GM18951 (cell line): ENCODE measurements at regions of chr22 and their contacts with region 1.

Region 1: GRCh38 chr22:22110548-22111266 is 128.1 kb upstream of the TOP3B start:
- POLR2A ChIP-seq: no peak

Region 2: GRCh38 chr22:20656902-20657836 is 1453.5 kb before region 1 on chr22:
- in situ Hi-C with region 1: loop called (anchors 25 kb)
- POLR2A ChIP-seq: no peak

Region 3: DNA sequence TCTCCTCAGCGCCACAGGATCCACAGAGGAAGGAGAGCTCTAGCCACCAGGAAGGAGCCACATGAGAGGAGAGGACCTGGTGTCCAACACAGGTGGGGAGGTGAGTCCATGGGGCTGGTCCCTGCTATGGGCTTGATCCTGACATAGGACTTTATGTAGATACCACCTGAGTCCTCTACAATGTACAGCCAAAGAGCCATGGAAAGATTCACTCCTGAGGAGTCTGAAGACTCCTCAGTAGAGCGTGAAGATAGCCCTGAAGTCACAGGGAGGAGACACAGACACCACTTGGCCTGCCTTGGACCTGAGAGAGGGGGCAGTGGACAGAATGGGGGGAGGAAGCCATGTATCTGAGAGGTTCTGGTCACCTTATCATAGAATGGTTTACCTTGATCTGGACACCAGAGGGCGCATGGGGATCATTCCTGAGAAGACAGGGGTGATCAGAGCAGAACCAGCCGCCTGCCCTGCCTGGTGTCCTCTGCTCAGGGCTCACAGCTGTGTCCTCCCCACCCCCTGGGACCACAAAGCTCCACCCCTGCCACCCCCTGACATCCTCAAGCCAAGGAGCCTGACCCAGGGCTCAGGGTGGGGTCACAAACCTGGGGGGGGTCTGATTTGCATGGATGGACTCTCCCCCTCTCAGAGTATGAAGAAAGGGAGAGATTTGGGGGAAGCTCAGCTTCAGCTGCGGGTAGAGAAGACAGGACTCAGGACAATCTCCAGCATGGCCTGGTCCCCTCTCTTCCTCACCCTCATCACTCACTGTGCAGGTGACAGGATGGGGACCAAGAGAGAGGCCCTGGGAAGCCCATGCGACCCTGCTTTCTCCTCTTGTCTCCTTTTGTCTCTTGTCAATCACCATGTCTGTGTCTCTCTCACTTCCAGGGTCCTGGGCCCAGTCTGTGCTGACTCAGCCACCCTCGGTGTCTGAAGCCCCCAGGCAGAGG is 320.8 kb after region 1 on chr22:
- in situ Hi-C with region 1: no loop called
- POLR2A ChIP-seq: no peak